ENCODE measurements at regions of chr19 and their contacts with region 1.

Region 1: DNA sequence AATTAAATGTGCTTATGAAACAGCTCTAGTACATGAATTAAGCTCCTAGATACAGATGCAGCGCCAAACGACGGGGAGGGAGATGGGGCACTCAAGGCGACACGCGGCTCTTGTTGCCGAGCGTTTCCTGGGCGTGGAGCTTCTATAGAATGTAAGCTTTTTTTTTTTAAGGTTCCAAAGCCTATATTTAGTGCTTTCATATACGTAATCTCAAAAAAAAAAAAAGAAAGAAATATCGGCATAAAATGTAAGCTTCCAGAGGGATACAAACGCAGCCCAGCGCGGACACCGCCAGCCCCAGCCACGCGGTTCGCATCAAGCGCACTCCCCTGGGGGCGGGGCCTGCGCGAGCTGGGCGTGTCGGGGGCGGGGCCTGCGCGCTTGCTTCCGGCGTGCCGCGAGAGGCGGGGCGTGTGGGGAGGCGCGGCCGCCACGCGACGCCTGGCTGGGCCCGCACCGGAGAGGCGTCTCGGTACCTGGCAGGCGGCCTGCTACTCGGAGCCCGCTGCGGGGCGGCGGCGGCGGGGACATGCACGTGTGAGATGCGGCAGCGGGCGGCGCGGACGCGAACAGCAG is at the start of gene URI1:
- DNase-seq: peak; percentile 67 to 79 (median 74)
- H3K4me3 ChIP-seq: peak within 1 kb of the TSS; percentile 82 to 85 (median 82)
- H3K4me3 Mint-ChIP-seq: peak within 1 kb of the TSS; percentile 82 to 93
- H3K27ac ChIP-seq: peak within 1 kb of the TSS in 1 of 2 donors; percentile 69
- H3K27ac Mint-ChIP-seq: peak within 1 kb of the TSS in 6 of 7 donors; percentile 73 to 92 (median 84)
- H3K4me1 ChIP-seq: peaks cover 13 to 21% of the 10 kb centered on the region in 2 donors
- H3K4me1 Mint-ChIP-seq: peaks cover 33% of the 10 kb centered on the region
- H3K27me3 ChIP-seq: no peaks in the 10 kb centered on the region
- H3K27me3 Mint-ChIP-seq: peaks cover 0 to 8% (median 8%) of the 10 kb centered on the region in 3 donors
- CTCF ChIP-seq: no peak
- polyA plus RNA-seq, gene URI1: 5.3 to 19.3 (median 9.7) TPM

Region 2: GRCh38 chr19:29811125-29812079 is 130.5 kb before region 1 on chr19 and contains the start of gene CCNE1:
- intact Hi-C with region 1: loop called (anchors 2 to 10 kb)
- DNase-seq: peak; percentile 78 to 83 (median 79)
- H3K4me3 ChIP-seq: peak within 1 kb of the TSS; percentile 43 to 77 (median 63)
- H3K4me3 Mint-ChIP-seq: peak within 1 kb of the TSS; percentile 82 to 84
- H3K27ac ChIP-seq: peak within 1 kb of the TSS in 1 of 2 donors; percentile 29
- H3K27ac Mint-ChIP-seq: peak within 1 kb of the TSS in 6 of 7 donors; percentile 53 to 86 (median 76)
- H3K4me1 ChIP-seq: peaks cover 8 to 16% of the 10 kb centered on the region in 2 donors
- H3K4me1 Mint-ChIP-seq: peaks cover 11% of the 10 kb centered on the region
- H3K27me3 ChIP-seq: no peaks in the 10 kb centered on the region
- H3K27me3 Mint-ChIP-seq: peaks cover 3 to 7% (median 5%) of the 10 kb centered on the region in 3 donors
- CTCF ChIP-seq: no peak
- polyA plus RNA-seq, gene CCNE1: 1.7 TPM in 1 of 3 donors, not detected in the others

Region 3: DNA sequence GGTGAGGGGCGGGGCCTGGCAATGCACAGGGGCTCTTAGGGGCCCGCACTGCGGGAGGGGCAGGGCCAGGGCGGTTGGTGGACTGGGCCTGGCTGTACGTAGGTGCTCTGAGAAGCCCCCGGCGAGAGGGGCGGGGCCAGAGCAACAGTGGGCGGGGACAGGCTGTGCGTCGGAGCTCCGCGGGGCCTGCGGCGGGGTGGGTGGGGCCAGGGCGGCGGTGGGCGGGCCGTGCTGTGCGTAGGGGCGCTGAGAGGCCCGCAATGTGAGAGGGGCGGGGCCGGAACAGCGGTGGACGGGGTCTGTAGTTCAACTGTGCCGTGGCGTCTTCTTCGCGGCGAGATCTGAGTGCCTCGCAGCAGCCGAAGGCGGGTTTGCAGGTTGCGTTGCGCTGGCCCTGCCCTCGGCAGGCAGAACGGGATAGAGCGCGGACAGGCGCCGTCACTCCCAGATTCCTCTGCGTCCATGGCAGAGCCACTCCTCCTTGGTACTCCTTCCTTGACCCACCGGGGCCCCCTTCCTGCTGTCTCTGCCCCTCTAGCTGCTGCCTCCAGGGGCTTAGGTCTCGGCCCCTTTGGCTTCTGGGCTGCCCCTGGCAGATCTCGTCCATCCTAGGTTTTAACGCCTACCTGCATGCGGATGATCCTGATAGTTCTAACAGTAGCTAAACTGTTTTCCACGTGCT is 96.9 kb before region 1 on chr19:
- intact Hi-C with region 1: loop called (anchors 2 to 5 kb)
- DNase-seq: peak; percentile 75 to 82 (median 81)
- H3K4me3 ChIP-seq: peak overlapping the region; percentile 90 to 98 (median 95)
- H3K4me3 Mint-ChIP-seq: peak overlapping the region; percentile 91 to 95
- H3K27ac ChIP-seq: peak overlapping the region; percentile 17 to 62
- H3K27ac Mint-ChIP-seq: peak overlapping the region; percentile 78 to 93 (median 86)
- H3K4me1 ChIP-seq: peaks cover 28 to 31% of the 10 kb centered on the region in 2 donors
- H3K4me1 Mint-ChIP-seq: peaks cover 26% of the 10 kb centered on the region
- H3K27me3 ChIP-seq: no peaks in the 10 kb centered on the region
- H3K27me3 Mint-ChIP-seq: peaks cover 12 to 18% (median 12%) of the 10 kb centered on the region in 3 donors
- CTCF ChIP-seq: no peak

Measured in CD14-positive monocyte (primary cell).